CD8-positive, alpha-beta T cell (primary cell): ENCODE measurements at regions of chr6 and their contacts with region 1.

Region 1: DNA sequence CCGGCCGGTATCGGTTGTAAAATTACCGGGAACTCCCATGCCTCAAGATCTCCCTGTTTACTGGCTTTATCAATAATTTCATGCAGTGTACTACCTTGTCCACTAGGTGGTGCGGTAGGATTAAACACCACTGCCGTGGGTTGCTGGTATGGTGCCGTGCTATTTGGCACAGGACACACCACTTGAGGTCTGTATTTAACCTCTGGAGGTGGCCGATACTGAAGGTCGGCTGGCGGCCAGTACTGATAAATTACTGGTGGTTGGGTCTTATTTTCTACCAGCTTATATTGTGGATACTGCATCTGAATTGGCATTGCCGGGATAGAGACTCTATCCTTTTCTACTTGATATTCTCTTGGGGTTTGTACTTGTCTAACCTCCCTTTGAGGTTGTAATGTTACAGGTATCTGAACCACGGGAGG is 14.3 kb upstream of the PTCRA start:
- DNase-seq: peak; percentile 32 to 89 (median 67)
- ATAC-seq: peak; percentile 100
- H3K4me3 ChIP-seq: no peak overlapping the region
- H3K4me3 Mint-ChIP-seq: peak overlapping the region; percentile 63
- H3K27ac ChIP-seq: no peak overlapping the region
- H3K27ac Mint-ChIP-seq: no peak overlapping the region
- H3K4me1 ChIP-seq: peaks cover 6% of the 10 kb centered on the region
- H3K4me1 Mint-ChIP-seq: peaks cover 17% of the 10 kb centered on the region
- H3K27me3 ChIP-seq: no peaks in the 10 kb centered on the region
- H3K27me3 Mint-ChIP-seq: no peaks in the 10 kb centered on the region
- CTCF ChIP-seq: peak; percentile 92

Region 2: DNA sequence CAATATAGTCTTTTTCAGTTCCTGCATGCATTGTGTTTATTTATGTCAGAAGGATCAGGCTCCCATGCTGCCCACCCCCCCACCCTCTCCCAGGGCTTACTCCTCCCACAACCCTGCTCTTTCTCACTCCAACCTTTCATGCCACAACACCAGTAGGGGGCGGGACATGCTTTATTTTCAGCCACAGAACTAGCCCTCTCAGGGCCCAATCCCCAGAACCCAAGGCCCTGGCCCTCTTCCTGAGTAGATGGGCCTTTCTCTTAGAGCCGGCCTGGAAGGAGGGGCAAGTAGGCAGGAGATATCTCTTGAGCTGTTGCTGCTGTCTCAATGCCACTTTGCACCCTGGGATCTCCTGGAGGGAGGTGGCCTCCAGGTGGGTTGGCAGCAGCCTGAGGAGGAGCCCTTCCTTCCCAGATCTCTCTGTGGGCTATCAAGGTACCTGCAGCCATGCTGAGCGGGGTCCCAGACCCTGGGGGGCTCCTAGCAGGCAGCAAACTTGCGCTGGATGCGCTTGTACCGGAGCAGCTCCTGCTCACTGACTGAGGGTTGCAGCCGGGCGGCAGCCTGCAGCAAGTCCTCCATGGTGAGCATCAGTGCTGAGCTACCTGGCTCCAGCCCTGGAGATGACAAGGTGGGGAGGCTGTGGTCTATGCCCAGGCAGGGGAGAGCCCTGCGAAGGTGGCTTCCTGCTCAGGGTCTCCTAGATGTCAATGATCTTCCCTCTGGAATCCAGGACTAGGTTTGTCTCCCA is 62.5 kb after region 1 on chr6:
- CTCF ChIA-PET with region 1: no interaction called
- POLR2A ChIA-PET with region 1: no interaction called
- intact Hi-C with region 1: loop called in 1 of 2 experiments (anchors 5 kb)
- DNase-seq: peak in 4 of 9 experiments; percentile 28 to 56 (median 45)
- ATAC-seq: peak; percentile 43
- H3K4me3 ChIP-seq: no peak overlapping the region
- H3K4me3 Mint-ChIP-seq: no peak overlapping the region
- H3K27ac ChIP-seq: no peak overlapping the region
- H3K27ac Mint-ChIP-seq: no peak overlapping the region
- H3K4me1 ChIP-seq: peaks cover 10% of the 10 kb centered on the region
- H3K4me1 Mint-ChIP-seq: peaks cover 15% of the 10 kb centered on the region
- H3K27me3 ChIP-seq: no peaks in the 10 kb centered on the region
- H3K27me3 Mint-ChIP-seq: no peaks in the 10 kb centered on the region
- CTCF ChIP-seq: no peak

Region 3: DNA sequence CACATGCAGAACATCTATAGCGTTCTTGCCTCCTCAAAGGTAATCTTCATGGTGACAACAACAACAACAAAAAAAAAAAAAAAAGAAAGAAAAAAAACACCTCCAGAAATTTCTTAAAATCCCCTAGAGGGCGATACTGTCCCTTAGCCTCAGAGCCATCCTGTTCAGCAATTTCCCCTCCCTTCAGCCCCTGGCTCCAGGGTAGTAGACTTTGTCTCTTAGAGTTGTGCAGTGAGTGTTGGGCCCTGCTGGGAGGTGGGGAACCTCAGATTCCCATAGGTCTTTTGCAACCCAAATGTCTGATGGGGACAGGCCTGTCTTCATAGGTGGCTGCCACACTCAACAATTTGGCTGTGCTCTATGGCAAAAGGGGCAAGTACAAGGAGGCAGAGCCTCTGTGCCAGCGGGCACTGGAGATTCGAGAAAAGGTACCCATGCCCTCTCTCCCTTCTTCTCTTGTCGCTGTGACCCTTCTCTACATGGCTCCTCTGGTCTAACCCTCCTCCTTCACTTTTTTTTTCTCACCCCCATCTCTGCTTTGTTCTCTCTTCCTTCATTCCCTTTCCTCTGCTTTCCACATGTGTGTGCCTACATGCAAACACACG is 168.6 kb after region 1 on chr6:
- CTCF ChIA-PET with region 1: no interaction called
- POLR2A ChIA-PET with region 1: no interaction called
- intact Hi-C with region 1: loop called in 1 of 2 experiments (anchors 1 kb)
- DNase-seq: peak in 2 of 9 experiments; percentile 55 to 72
- ATAC-seq: peak; percentile 78
- H3K4me3 ChIP-seq: no peak overlapping the region
- H3K4me3 Mint-ChIP-seq: no peak overlapping the region
- H3K27ac ChIP-seq: no peak overlapping the region
- H3K27ac Mint-ChIP-seq: no peak overlapping the region
- H3K4me1 ChIP-seq: no peaks in the 10 kb centered on the region
- H3K4me1 Mint-ChIP-seq: peaks cover 2% of the 10 kb centered on the region
- H3K27me3 ChIP-seq: no peaks in the 10 kb centered on the region
- H3K27me3 Mint-ChIP-seq: no peaks in the 10 kb centered on the region
- CTCF ChIP-seq: peak; percentile 62